ENCODE measurements at regions of chr10 and their contacts with region 1.

Region 1: GRCh38 chr10:81838953-81839352 is 36.0 kb upstream of the NRG3 start:
- DNase-seq: no peak
- H3K4me3 ChIP-seq: no peak overlapping the region
- H3K27ac ChIP-seq: no peak overlapping the region
- H3K4me1 ChIP-seq: no peaks in the 10 kb centered on the region
- H3K27me3 ChIP-seq: no peaks in the 10 kb centered on the region
- CTCF ChIP-seq: no peak
- POLR2A ChIP-seq: no peak

Region 2: GRCh38 chr10:81479316-81479715 is 359.6 kb before region 1 on chr10:
- intact Hi-C with region 1: loop called (anchors 5 kb)
- DNase-seq: no peak
- H3K4me3 ChIP-seq: no peak overlapping the region
- H3K27ac ChIP-seq: no peak overlapping the region
- H3K4me1 ChIP-seq: no peaks in the 10 kb centered on the region
- H3K27me3 ChIP-seq: no peaks in the 10 kb centered on the region
- CTCF ChIP-seq: no peak
- POLR2A ChIP-seq: no peak

Region 3: DNA sequence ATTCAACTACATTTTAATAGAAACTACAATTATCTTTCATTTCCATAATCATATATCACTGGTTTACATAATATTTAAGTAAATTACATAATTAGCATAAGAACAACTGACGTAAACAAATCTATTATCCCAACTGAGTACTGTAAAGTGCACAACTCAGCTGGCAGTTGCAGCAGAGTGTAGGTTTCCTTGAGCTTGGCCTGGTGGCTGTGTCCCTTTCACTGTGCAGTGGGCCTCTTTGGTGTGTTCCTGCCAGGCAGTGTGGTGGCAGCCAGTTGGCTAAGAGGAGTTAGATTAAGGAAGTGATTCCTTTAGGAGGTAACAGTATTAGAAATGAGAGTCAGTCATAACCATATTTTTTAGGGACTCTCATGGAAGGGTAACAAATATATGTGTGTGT is 43.1 kb after region 1 on chr10:
- intact Hi-C with region 1: no loop called
- DNase-seq: no peak
- H3K4me3 ChIP-seq: no peak overlapping the region
- H3K27ac ChIP-seq: no peak overlapping the region
- H3K4me1 ChIP-seq: no peaks in the 10 kb centered on the region
- H3K27me3 ChIP-seq: no peaks in the 10 kb centered on the region
- CTCF ChIP-seq: no peak
- POLR2A ChIP-seq: no peak

Measured in breast epithelium (tissue), 4 donors.